GM12878 (cell line): ENCODE measurements at regions of chr11 and their contacts with region 1.

Region 1: DNA sequence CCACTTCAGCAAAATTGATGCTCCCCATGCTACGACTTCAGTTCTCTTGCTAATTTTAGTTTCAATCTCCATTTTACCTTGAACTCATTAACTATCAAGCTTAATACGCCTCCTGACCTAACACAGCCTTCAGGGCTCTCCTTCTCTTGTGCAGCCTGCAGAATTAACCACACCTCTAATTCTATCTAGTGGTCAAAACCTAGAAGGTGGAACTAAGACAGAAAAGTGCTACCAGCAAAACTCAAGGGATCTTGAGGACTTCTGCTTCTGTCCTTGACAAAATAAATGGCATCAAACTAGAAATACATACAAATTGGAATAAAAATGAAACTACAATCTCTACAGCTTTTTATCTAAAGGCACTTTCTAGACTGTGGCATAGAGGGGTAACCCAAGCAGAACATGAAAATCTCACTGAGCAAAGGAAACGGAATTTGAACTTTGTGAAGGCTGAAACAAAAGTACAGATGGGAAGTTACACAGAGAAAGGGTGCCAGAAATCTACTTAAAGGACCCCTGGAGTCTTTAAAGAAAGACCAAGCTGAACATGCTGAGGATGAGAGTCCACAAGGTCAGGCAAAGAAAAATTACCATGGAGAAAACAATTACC is 10.7 kb downstream of the CWF19L2 start:
- DNase-seq: no peak
- ATAC-seq: peak; percentile 54
- H3K4me3 ChIP-seq: no peak overlapping the region
- H3K27ac ChIP-seq: no peak overlapping the region
- H3K4me1 ChIP-seq: no peaks in the 10 kb centered on the region
- H3K27me3 ChIP-seq: no peaks in the 10 kb centered on the region
- CTCF ChIP-seq: no peak
- EP300 ChIP-seq: no peak
- POLR2A ChIP-seq: no peak
- RAD21 ChIP-seq: no peak

Region 2: DNA sequence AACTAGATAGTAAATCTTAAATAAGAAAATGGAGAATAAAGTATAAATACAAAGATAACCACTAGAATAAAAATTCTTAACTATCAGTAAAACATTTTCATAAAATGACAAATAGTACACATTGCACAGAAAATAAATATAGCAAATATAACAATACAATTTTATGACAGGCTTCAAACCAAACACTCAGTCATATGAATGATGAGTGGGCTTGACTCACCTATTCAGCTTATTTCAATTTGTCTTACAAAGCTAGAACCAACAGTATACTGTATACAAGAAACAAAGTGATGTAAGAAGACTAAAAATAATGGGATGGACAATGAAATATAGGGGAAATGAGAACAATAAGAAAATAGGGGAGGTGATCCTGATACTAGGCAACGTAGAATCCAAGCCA is 130.5 kb before region 1 on chr11:
- CTCF ChIA-PET with region 1: no interaction called
- POLR2A ChIA-PET with region 1: no interaction called
- RAD21 ChIA-PET with region 1: no interaction called
- SMC1A ChIA-PET with region 1: no interaction called
- in situ Hi-C with region 1: no loop called
- intact Hi-C with region 1: no loop called
- DNase-seq: no peak
- ATAC-seq: no peak
- H3K4me3 ChIP-seq: no peak overlapping the region
- H3K27ac ChIP-seq: no peak overlapping the region
- H3K4me1 ChIP-seq: no peaks in the 10 kb centered on the region
- H3K27me3 ChIP-seq: no peaks in the 10 kb centered on the region
- CTCF ChIP-seq: no peak
- EP300 ChIP-seq: no peak
- POLR2A ChIP-seq: no peak
- RAD21 ChIP-seq: no peak

Region 3: GRCh38 chr11:107457558-107458271 is 10.8 kb after region 1 on chr11 and contains the start of gene CWF19L2:
- CTCF ChIA-PET with region 1: no interaction called
- POLR2A ChIA-PET with region 1: interaction called, 20 read pairs
- RAD21 ChIA-PET with region 1: no interaction called
- SMC1A ChIA-PET with region 1: interaction called, 13 read pairs
- in situ Hi-C with region 1: no loop called
- intact Hi-C with region 1: no loop called
- DNase-seq: peak; percentile 93
- ATAC-seq: peak; percentile 98
- H3K4me3 ChIP-seq: peak within 1 kb of the TSS; percentile 81
- H3K27ac ChIP-seq: peak within 1 kb of the TSS; percentile 64
- H3K4me1 ChIP-seq: no peaks in the 10 kb centered on the region
- H3K27me3 ChIP-seq: no peaks in the 10 kb centered on the region
- CTCF ChIP-seq: no peak
- EP300 ChIP-seq: no peak
- POLR2A ChIP-seq: peak; percentile 82
- RAD21 ChIP-seq: no peak
- polyA plus RNA-seq, gene CWF19L2: 4.6 to 5.8 TPM

Region 4: GRCh38 chr11:107565219-107565937 is 118.5 kb after region 1 on chr11 and contains the start of gene ALKBH8:
- CTCF ChIA-PET with region 1: no interaction called
- POLR2A ChIA-PET with region 1: no interaction called
- RAD21 ChIA-PET with region 1: no interaction called
- SMC1A ChIA-PET with region 1: no interaction called
- in situ Hi-C with region 1: no loop called
- intact Hi-C with region 1: no loop called
- DNase-seq: peak; percentile 50
- ATAC-seq: peak; percentile 89
- H3K4me3 ChIP-seq: peak within 1 kb of the TSS; percentile 71
- H3K27ac ChIP-seq: peak within 1 kb of the TSS; percentile 89
- H3K4me1 ChIP-seq: peaks cover 25% of the 10 kb centered on the region
- H3K27me3 ChIP-seq: no peaks in the 10 kb centered on the region
- CTCF ChIP-seq: no peak; a peak in 1 of 6 replicates
- EP300 ChIP-seq: no peak
- POLR2A ChIP-seq: peak; percentile 73
- RAD21 ChIP-seq: no peak
- polyA plus RNA-seq, gene ALKBH8: 4.6 to 4.7 TPM